Activated CD8-positive, alpha-beta T cell treated with anti-CD3 and anti-CD28 coated beads for 36 hours (primary cell): ENCODE measurements at regions of chr1 and their contacts with region 1.

Region 1: GRCh38 chr1:116139592-116140134 is 28.5 kb downstream of the MAB21L3 start:
- DNase-seq: no peak
- ATAC-seq: no peak
- H3K4me3 Mint-ChIP-seq: no peak overlapping the region
- H3K27ac Mint-ChIP-seq: no peak overlapping the region
- H3K4me1 Mint-ChIP-seq: peaks cover 6% of the 10 kb centered on the region
- H3K27me3 Mint-ChIP-seq: peaks cover 2% of the 10 kb centered on the region
- CTCF ChIP-seq: no peak

Region 2: DNA sequence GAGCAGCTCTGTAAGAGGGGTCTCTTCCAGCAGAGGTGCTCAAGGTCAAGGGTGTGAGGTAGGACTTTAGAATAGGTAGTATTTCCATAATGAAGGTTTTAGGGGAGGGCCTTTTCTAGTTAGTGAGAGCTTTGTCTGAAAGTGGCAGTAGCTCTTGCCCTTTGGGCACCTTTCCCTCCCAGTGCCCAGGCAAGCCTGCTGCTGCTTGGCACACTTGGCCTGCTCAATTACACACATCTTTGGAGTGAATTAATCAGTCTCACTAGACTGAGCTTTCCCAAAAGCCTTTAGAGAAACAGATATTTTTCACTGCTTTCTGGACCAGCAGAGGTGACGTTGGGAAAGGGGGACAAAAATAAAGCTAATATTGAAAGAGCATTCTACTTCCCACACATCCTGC is 19.5 kb after region 1 on chr1:
- CTCF ChIA-PET with region 1: interaction called, 22 read pairs
- POLR2A ChIA-PET with region 1: interaction called, 3 read pairs
- intact Hi-C with region 1: no loop called
- DNase-seq: no peak
- ATAC-seq: no peak
- H3K4me3 Mint-ChIP-seq: no peak overlapping the region
- H3K27ac Mint-ChIP-seq: no peak overlapping the region
- H3K4me1 Mint-ChIP-seq: no peaks in the 10 kb centered on the region
- H3K27me3 Mint-ChIP-seq: no peaks in the 10 kb centered on the region
- CTCF ChIP-seq: no peak

Region 3: DNA sequence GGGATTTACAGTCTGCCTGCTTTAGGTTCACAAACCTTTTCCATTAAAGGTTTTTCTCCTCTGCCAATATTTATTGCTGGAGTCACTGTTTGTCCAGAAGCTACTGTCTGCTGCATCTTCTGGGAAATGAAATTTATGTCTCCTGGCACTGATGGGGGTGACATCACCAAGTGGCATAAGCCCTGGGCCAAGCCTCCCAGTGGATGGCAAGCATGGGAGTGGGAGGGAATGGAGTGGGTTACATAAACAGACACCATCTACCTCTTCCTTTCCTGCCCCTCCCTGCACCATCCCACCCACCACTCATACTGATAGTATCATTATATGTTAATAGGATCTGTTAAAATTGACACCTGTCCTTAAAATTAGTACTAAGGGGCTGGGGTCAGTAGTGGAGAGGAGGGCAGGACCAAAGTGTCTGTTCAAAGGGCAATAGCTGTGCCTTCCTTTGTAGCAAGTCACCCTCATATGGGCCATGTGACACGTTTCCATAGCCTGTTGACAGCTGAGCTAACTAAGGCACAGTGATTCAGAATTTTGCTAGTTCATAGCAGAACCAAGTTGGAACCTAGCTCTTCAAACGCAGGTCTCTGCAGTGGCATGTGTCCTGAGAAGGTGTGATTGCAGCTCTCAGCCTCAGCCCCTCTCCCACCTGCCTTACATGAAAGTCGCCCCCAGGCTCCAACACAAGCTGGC is 42.5 kb after region 1 on chr1:
- CTCF ChIA-PET with region 1: interaction called, 15 read pairs
- POLR2A ChIA-PET with region 1: no interaction called
- intact Hi-C with region 1: no loop called
- DNase-seq: no peak
- ATAC-seq: no peak
- H3K4me3 Mint-ChIP-seq: no peak overlapping the region
- H3K27ac Mint-ChIP-seq: no peak overlapping the region
- H3K4me1 Mint-ChIP-seq: no peaks in the 10 kb centered on the region
- H3K27me3 Mint-ChIP-seq: peaks cover 3% of the 10 kb centered on the region
- CTCF ChIP-seq: no peak

Region 4: GRCh38 chr1:116409751-116410191 is 270.1 kb after region 1 on chr1:
- CTCF ChIA-PET with region 1: interaction called, 10 read pairs
- POLR2A ChIA-PET with region 1: no interaction called
- intact Hi-C with region 1: no loop called
- DNase-seq: no peak
- ATAC-seq: no peak
- H3K4me3 Mint-ChIP-seq: no peak overlapping the region
- H3K27ac Mint-ChIP-seq: peak overlapping the region; percentile 17
- H3K4me1 Mint-ChIP-seq: peaks cover 19% of the 10 kb centered on the region
- H3K27me3 Mint-ChIP-seq: no peaks in the 10 kb centered on the region
- CTCF ChIP-seq: no peak

Region 5: DNA sequence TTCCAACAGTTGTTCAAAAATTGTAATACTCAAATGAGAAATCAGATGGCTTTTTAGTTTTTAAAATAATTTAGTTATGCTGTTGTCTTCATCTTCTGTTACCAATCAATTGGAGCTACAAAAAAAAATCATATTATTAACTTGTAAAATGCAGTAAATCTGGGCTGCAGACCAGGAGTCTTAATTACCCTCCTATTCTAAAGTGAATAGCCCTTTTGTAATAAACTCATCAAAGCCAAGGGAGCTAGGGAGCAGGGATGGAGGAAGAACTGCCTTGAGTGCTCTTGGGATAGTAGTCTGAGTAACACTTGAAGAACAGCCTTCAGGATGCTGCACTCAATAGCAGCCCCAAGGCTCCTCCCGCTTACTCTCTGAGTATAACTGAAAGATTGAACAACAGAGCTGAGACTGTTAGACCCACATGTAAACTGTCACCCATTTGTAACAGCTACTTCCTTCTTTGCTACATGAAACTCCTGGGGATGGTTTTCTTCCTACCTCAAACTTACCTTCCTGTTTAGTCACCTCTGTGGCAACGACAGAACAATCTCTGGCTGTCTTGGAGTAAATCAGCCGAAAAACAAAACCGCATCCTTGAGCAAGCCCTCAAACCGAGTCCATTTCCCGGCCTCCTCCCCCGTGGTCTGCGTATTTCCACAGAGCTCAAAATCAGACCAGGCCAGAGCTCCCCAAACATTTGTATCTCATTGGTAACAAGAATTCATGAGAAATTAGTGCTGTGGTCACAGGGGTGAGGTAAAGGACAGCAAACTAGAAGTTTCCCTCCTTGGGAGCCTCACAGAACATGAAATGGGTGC is 375.3 kb after region 1 on chr1:
- CTCF ChIA-PET with region 1: interaction called, 11 read pairs
- POLR2A ChIA-PET with region 1: no interaction called
- intact Hi-C with region 1: no loop called
- DNase-seq: peak; percentile 76
- ATAC-seq: peak; percentile 91
- H3K4me3 Mint-ChIP-seq: peak overlapping the region; percentile 42
- H3K27ac Mint-ChIP-seq: peak overlapping the region; percentile 89
- H3K4me1 Mint-ChIP-seq: peaks cover 50% of the 10 kb centered on the region
- H3K27me3 Mint-ChIP-seq: no peaks in the 10 kb centered on the region
- CTCF ChIP-seq: no peak